Activated naive CD4-positive, alpha-beta T cell treated with anti-CD3 and anti-CD28 coated beads for 36 hours (primary cell): ENCODE measurements at regions of chr3 and their contacts with region 1.

Region 1: GRCh38 chr3:112979240-112979832 is 4.4 kb upstream of the CD200R1 start:
- DNase-seq: no peak
- H3K4me3 Mint-ChIP-seq: no peak overlapping the region
- H3K27ac Mint-ChIP-seq: no peak overlapping the region
- H3K4me1 Mint-ChIP-seq: peaks cover 64% of the 10 kb centered on the region
- H3K27me3 Mint-ChIP-seq: no peaks in the 10 kb centered on the region

Region 2: DNA sequence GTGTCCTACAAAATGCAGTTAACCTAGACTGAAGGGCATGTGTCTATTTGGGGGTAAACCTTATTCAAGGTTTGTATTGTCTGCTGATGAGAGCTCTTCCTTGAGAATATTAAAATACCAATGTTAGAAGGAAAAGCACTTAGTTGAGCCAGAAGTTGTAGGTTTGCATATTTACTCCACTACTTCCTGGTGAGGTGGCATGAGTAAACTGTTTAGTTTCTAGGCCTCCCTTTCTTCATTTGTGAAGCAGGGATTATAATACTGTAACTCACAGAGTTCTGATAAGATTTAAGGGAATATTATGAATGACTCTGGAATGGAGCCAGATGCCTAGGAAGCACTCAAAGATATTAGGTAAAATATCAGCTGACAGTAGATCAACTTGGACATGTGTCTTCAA is 179.4 kb before region 1 on chr3:
- CTCF ChIA-PET with region 1: no interaction called
- intact Hi-C with region 1: loop called (anchors 5 kb)
- DNase-seq: no peak
- H3K4me3 Mint-ChIP-seq: no peak overlapping the region
- H3K27ac Mint-ChIP-seq: no peak overlapping the region
- H3K4me1 Mint-ChIP-seq: peaks cover 32% of the 10 kb centered on the region
- H3K27me3 Mint-ChIP-seq: no peaks in the 10 kb centered on the region

Region 3: DNA sequence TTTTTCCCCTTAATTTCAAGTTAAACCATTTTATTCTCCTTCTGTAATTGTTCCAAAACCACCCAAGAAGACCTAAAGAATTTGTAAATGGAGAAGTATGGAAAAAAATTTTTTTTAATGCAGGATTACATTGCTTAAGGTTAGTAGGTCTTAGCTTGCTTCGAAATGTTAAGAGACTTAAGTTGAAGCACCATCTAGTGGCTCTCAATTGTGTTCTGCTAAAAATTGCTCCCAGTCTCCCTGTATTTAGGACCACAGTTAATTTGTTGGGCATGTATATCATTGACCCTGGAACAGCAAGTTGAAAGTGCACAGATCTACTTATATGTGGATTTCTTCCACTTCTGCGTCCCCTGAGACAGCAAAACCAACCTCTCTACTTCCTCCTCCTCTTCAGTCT is 165.1 kb before region 1 on chr3:
- CTCF ChIA-PET with region 1: no interaction called
- intact Hi-C with region 1: loop called (anchors 1 kb)
- DNase-seq: no peak
- H3K4me3 Mint-ChIP-seq: no peak overlapping the region
- H3K27ac Mint-ChIP-seq: no peak overlapping the region
- H3K4me1 Mint-ChIP-seq: peaks cover 8% of the 10 kb centered on the region
- H3K27me3 Mint-ChIP-seq: no peaks in the 10 kb centered on the region